ENCODE measurements at regions of chr16 and their contacts with region 1.

Region 1: GRCh38 chr16:21599233-21600030 is at the start of gene METTL9:
- DNase-seq: peak; percentile 91 to 98 (median 94)
- ATAC-seq: peak; percentile 90
- H3K4me3 ChIP-seq: peak within 1 kb of the TSS; percentile 85
- H3K4me3 Mint-ChIP-seq: peak within 1 kb of the TSS; percentile 98
- H3K27ac ChIP-seq: peak within 1 kb of the TSS; percentile 85 to 86
- H3K27ac Mint-ChIP-seq: peak within 1 kb of the TSS; percentile 89
- H3K4me1 ChIP-seq: peaks cover 32% of the 10 kb centered on the region
- H3K4me1 Mint-ChIP-seq: peaks cover 62% of the 10 kb centered on the region
- H3K27me3 ChIP-seq: no peaks in the 10 kb centered on the region
- H3K27me3 Mint-ChIP-seq: no peaks in the 10 kb centered on the region
- CTCF ChIP-seq: no peak
- total RNA-seq, gene METTL9: 78.4 to 86.7 TPM

Region 2: DNA sequence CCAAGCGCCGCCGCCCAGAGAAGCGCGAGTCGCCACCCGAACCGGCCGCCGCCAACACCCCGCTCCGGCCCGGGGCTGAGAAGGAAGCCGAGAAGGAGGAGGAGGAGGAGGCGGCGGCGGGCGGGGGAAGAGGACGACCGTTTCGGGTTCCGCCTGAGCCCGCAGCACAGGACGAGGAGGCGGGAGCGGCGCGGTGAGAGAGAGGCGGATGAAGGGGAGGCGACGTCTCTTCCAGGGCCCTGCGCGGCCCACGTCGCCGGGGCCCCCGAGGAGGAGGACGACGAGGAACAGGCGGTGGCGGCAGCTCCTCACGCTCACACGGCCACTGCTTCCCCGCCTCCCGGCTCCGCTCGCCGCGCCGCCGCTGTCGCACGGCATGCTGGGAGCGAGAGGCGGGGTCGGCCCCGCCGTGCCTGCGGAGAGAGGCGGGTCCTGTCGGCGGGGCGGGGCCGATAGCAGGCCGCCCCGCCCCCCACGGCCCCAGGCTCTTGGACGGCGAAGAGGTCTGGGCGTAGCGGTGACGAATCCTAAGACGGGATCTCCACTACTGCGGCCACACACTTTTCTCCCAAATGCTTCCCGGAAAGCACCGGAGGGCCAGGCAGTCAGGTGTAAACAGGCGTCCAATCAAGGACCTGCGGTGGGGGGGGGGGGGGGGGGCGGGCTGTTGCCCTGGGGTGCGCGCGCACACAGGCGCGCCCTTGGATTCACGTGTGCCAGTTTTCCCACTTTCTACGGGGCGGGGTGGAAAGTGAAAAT is 97.3 kb before region 1 on chr16:
- CTCF ChIA-PET with region 1: interaction called, 3 read pairs
- POLR2A ChIA-PET with region 1: no interaction called
- intact Hi-C with region 1: loop called in 1 of 2 experiments (anchors 10 kb)
- DNase-seq: peak; percentile 78 to 96 (median 88)
- ATAC-seq: peak; percentile 82
- H3K4me3 ChIP-seq: peak overlapping the region; percentile 80
- H3K4me3 Mint-ChIP-seq: peak overlapping the region; percentile 92
- H3K27ac ChIP-seq: peak overlapping the region; percentile 95 to 98
- H3K27ac Mint-ChIP-seq: peak overlapping the region; percentile 90
- H3K4me1 ChIP-seq: peaks cover 32% of the 10 kb centered on the region
- H3K4me1 Mint-ChIP-seq: peaks cover 21% of the 10 kb centered on the region
- H3K27me3 ChIP-seq: no peaks in the 10 kb centered on the region
- H3K27me3 Mint-ChIP-seq: no peaks in the 10 kb centered on the region
- CTCF ChIP-seq: no peak

Region 3: GRCh38 chr16:21646721-21647561 is 47.5 kb after region 1 on chr16:
- CTCF ChIA-PET with region 1: interaction called, 3 read pairs
- POLR2A ChIA-PET with region 1: interaction called, 22 read pairs
- intact Hi-C with region 1: loop called in 1 of 2 experiments (anchors 1 kb)
- DNase-seq: peak; percentile 50 to 90 (median 68)
- ATAC-seq: peak; percentile 79
- H3K4me3 ChIP-seq: peak overlapping the region; percentile 6
- H3K4me3 Mint-ChIP-seq: peak overlapping the region; percentile 75
- H3K27ac ChIP-seq: peak overlapping the region; percentile 66 to 82
- H3K27ac Mint-ChIP-seq: peak overlapping the region; percentile 91
- H3K4me1 ChIP-seq: peaks cover 59% of the 10 kb centered on the region
- H3K4me1 Mint-ChIP-seq: peaks cover 56% of the 10 kb centered on the region
- H3K27me3 ChIP-seq: no peaks in the 10 kb centered on the region
- H3K27me3 Mint-ChIP-seq: no peaks in the 10 kb centered on the region
- CTCF ChIP-seq: no peak

Region 4: GRCh38 chr16:21673469-21673868 is 74.0 kb after region 1 on chr16:
- CTCF ChIA-PET with region 1: no interaction called
- POLR2A ChIA-PET with region 1: no interaction called
- intact Hi-C with region 1: no loop called
- DNase-seq: no peak
- ATAC-seq: no peak
- H3K4me3 ChIP-seq: no peak overlapping the region
- H3K4me3 Mint-ChIP-seq: no peak overlapping the region
- H3K27ac ChIP-seq: no peak overlapping the region
- H3K27ac Mint-ChIP-seq: no peak overlapping the region
- H3K4me1 ChIP-seq: no peaks in the 10 kb centered on the region
- H3K4me1 Mint-ChIP-seq: no peaks in the 10 kb centered on the region
- H3K27me3 ChIP-seq: no peaks in the 10 kb centered on the region
- H3K27me3 Mint-ChIP-seq: peaks cover 4% of the 10 kb centered on the region
- CTCF ChIP-seq: no peak

Region 5: GRCh38 chr16:21952793-21953540 is 353.5 kb after region 1 on chr16 and contains the start of gene UQCRC2:
- CTCF ChIA-PET with region 1: no interaction called
- POLR2A ChIA-PET with region 1: no interaction called
- intact Hi-C with region 1: loop called in 1 of 2 experiments (anchors 5 kb)
- DNase-seq: peak; percentile 76 to 95 (median 82)
- ATAC-seq: peak; percentile 87
- H3K4me3 ChIP-seq: peak within 1 kb of the TSS; percentile 92
- H3K4me3 Mint-ChIP-seq: peak within 1 kb of the TSS; percentile 94
- H3K27ac ChIP-seq: peak within 1 kb of the TSS; percentile 93 to 96
- H3K27ac Mint-ChIP-seq: peak within 1 kb of the TSS; percentile 94
- H3K4me1 ChIP-seq: peaks cover 52% of the 10 kb centered on the region
- H3K4me1 Mint-ChIP-seq: peaks cover 62% of the 10 kb centered on the region
- H3K27me3 ChIP-seq: no peaks in the 10 kb centered on the region
- H3K27me3 Mint-ChIP-seq: no peaks in the 10 kb centered on the region
- CTCF ChIP-seq: no peak
- total RNA-seq, gene UQCRC2: 142 to 146 TPM

Region 6: GRCh38 chr16:22007509-22008214 is 408.2 kb after region 1 on chr16 and contains the start of gene MOSMO:
- CTCF ChIA-PET with region 1: no interaction called
- POLR2A ChIA-PET with region 1: no interaction called
- intact Hi-C with region 1: loop called in 1 of 2 experiments (anchors 5 kb)
- DNase-seq: peak; percentile 37 to 85 (median 66)
- ATAC-seq: peak; percentile 83
- H3K4me3 ChIP-seq: peak within 1 kb of the TSS; percentile 89
- H3K4me3 Mint-ChIP-seq: peak within 1 kb of the TSS; percentile 90
- H3K27ac ChIP-seq: peak within 1 kb of the TSS; percentile 37 to 47
- H3K27ac Mint-ChIP-seq: peak within 1 kb of the TSS; percentile 79
- H3K4me1 ChIP-seq: peaks cover 28% of the 10 kb centered on the region
- H3K4me1 Mint-ChIP-seq: peaks cover 51% of the 10 kb centered on the region
- H3K27me3 ChIP-seq: no peaks in the 10 kb centered on the region
- H3K27me3 Mint-ChIP-seq: no peaks in the 10 kb centered on the region
- CTCF ChIP-seq: no peak
- total RNA-seq, gene MOSMO: 2.3 to 2.8 TPM

Region 7: DNA sequence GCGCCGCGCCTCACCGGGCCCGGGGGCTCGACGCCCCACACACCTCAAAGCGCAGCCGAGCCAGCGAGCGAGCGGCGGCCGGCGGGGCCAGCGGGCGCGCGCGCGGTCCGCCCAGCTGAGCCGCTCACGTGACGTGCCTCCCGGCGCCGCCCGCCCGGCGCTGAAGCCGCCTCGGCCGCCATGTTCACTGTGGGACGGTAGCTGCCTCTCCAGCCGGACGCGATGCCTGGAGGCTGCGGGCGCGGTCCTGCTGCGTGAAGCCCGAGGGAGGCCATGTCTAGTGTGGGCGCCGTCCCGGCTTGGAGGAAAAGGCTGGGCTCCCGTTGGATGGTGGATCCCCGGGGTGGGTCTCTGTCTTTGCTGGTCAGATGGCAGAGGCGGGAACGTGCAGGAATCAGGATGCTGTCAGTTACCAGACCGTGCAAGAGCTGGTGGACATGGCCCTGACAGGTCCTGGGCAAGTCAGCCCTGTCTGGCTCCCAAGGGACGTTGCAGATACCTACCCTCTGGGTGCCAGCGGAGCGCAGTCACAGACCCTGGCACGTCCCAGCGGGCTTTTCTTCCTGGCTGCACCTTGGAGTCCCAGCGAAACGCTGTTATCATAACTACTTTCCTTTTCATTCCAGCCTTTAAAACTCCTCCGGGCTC is 1550.0 kb after region 1 on chr16 and contains the start of gene USP31:
- CTCF ChIA-PET with region 1: no interaction called
- POLR2A ChIA-PET with region 1: no interaction called
- intact Hi-C with region 1: loop called in 1 of 2 experiments (anchors 2 kb)
- DNase-seq: peak; percentile 79 to 95 (median 88)
- ATAC-seq: peak; percentile 97
- H3K4me3 ChIP-seq: peak within 1 kb of the TSS; percentile 80
- H3K4me3 Mint-ChIP-seq: peak within 1 kb of the TSS; percentile 96
- H3K27ac ChIP-seq: no peak within 1 kb of the TSS
- H3K27ac Mint-ChIP-seq: peak within 1 kb of the TSS; percentile 83
- H3K4me1 ChIP-seq: peaks cover 15% of the 10 kb centered on the region
- H3K4me1 Mint-ChIP-seq: peaks cover 27% of the 10 kb centered on the region
- H3K27me3 ChIP-seq: peaks cover 0 to 4% of the 10 kb centered on the region in 2 experiments
- H3K27me3 Mint-ChIP-seq: peaks cover 17% of the 10 kb centered on the region
- CTCF ChIP-seq: no peak
- total RNA-seq, gene USP31: 1.6 to 1.7 TPM